ENCODE measurements at regions of chr6 and their contacts with region 1.

Region 1: DNA sequence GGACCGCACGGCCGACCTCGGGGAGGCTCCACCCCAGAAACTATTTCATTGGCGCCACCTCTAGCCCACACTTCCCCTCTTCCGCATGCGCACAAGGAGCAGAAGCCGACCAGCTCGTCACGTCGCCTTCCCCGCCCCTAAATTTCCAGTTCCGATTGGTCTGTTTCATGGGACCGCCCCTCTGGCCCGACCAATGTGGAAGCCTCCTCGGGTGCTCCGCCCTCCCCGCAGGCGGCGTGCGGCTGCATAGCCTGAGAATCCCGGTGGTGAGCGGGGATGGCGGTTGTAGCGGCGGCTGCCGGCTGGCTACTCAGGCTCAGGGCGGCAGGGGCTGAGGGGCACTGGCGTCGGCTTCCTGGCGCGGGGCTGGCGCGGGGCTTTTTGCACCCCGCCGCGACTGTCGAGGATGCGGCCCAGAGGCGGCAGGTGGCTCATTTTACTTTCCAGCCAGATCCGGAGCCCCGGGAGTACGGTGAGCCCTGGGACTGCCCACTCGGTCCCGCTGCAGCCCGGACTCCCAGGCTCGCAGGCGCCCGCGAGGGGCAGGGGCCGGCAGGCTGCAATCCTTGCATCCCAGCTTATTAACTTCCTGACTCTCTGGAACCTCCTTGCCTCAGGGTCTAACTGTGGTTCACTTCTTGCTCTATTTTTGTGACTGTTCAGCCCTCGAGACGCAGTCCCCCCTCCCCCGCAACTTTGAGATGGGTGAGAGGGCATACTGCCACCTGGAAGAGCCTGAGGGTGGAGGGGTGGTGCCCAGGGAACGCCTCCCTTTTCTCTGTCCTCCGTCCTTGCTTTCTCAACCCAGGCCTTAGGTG is at the start of gene BCKDHB:
- DNase-seq: peak; percentile 97 to 100 (median 98)

Region 2: DNA sequence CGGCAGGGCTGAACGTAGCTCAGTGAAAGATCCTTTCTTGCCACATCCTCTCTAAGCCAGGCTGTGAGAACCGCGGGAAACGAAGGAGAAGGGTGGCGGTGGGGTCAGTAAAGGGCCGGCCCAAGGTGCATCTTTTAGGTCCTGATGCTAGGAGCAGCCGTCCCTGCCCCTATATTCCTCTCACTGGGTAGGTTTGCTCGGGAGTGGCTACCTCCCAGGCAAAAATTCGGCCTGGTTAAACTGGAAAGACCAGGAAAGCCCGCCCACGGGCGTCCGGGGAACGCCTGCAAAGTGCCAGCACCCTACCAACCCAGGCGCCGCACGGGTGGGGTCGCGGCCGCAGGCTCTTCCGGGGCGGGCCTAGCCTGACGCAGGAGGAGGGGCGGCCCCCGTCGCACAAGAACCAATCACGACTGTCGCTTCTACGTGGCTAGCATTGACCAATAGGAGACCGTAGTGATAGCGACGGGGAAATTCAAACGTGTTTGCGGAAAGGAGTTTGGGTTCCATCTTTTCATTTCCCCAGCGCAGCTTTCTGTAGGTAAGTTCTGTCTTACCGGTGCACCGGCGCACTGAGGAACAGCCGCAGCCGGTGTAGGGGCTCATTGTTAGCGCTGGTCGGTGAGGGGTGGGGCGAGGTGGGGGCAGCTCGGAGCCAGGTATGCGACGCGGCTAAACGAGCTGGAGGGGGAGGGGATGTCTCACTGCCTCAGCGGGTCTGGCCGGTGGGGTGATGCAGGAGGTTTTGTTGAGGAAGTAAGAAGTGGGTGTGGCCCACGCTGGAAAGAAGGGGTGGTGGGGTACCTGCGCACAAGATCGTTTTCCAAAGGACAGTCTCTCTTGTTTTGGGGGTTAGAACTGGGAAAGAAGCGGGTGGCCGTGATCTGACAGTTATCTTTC is 102.2 kb before region 1 on chr6 and contains the start of gene TTK:
- intact Hi-C with region 1: loop called (anchors 5 kb)
- DNase-seq: peak; percentile 82 to 99 (median 90)

Region 3: GRCh38 chr6:80029470-80029869 is 77.2 kb before region 1 on chr6:
- intact Hi-C with region 1: no loop called
- DNase-seq: no peak

Region 4: GRCh38 chr6:80250391-80250997 is 143.9 kb after region 1 on chr6:
- intact Hi-C with region 1: no loop called
- DNase-seq: no peak

Measured in posterior cingulate gyrus (tissue), 11 donors.